H1 (cell line): ENCODE measurements at regions of chr7 and their contacts with region 1.

Region 1: GRCh38 chr7:137592232-137592896 is 248.8 kb upstream of the PTN start:
- DNase-seq: peak; percentile 25 to 62
- H3K4me3 ChIP-seq: no peak overlapping the region
- H3K27ac ChIP-seq: no peak overlapping the region
- H3K4me1 ChIP-seq: peaks cover 0 to 6% (median 1%) of the 10 kb centered on the region in 4 experiments; a peak in 4 of 7 replicates
- H3K27me3 ChIP-seq: no peaks in the 10 kb centered on the region
- CTCF ChIP-seq: peak; percentile 79 to 86 (median 85)
- EP300 ChIP-seq: no peak; a peak in 1 of 3 replicates
- POLR2A ChIP-seq: no peak
- RAD21 ChIP-seq: peak; percentile 98 to 99

Region 2: GRCh38 chr7:137169282-137169698 is 423.1 kb before region 1 on chr7:
- CTCF ChIA-PET with region 1: interaction called, 34 read pairs
- POLR2A ChIA-PET with region 1: no interaction called
- DNase-seq: peak; percentile 47 to 65
- H3K4me3 ChIP-seq: no peak overlapping the region
- H3K27ac ChIP-seq: no peak overlapping the region
- H3K4me1 ChIP-seq: no peaks in the 10 kb centered on the region
- H3K27me3 ChIP-seq: no peaks in the 10 kb centered on the region
- CTCF ChIP-seq: peak; percentile 89 to 98 (median 90)
- EP300 ChIP-seq: no peak
- POLR2A ChIP-seq: no peak
- RAD21 ChIP-seq: peak; percentile 99 to 100

Region 3: GRCh38 chr7:137421366-137421765 is 171.0 kb before region 1 on chr7:
- CTCF ChIA-PET with region 1: no interaction called
- POLR2A ChIA-PET with region 1: no interaction called
- DNase-seq: no peak
- H3K4me3 ChIP-seq: no peak overlapping the region
- H3K27ac ChIP-seq: no peak overlapping the region
- H3K4me1 ChIP-seq: no peaks in the 10 kb centered on the region
- H3K27me3 ChIP-seq: no peaks in the 10 kb centered on the region
- CTCF ChIP-seq: no peak
- EP300 ChIP-seq: no peak
- POLR2A ChIP-seq: no peak
- RAD21 ChIP-seq: no peak

Region 4: GRCh38 chr7:137454246-137454724 is 138.1 kb before region 1 on chr7:
- CTCF ChIA-PET with region 1: interaction called, 13 read pairs
- POLR2A ChIA-PET with region 1: no interaction called
- DNase-seq: no peak
- H3K4me3 ChIP-seq: no peak overlapping the region
- H3K27ac ChIP-seq: no peak overlapping the region
- H3K4me1 ChIP-seq: no peaks in the 10 kb centered on the region
- H3K27me3 ChIP-seq: no peaks in the 10 kb centered on the region
- CTCF ChIP-seq: peak in 2 of 3 experiments; percentile 39 to 52; a peak in 2 of 4 replicates
- EP300 ChIP-seq: no peak
- POLR2A ChIP-seq: no peak
- RAD21 ChIP-seq: peak; percentile 74 to 78

Region 5: DNA sequence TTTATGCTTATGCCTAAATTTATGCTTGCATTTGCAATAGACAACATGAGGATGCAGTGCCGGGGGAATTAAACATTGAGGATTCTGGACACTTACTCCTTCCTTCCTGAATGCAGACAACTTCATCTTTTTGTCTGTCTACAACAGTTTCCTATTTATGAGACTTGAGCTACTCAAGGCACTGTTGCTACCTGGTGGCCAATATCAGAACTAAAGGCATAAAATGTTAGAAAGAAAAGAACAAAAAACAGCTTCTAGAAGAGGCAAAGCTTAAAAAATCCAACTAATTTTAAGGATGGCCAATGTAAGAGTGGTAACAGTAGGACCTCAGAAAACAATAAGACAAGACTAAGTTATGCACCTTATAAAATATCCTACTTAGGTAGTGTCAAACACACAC is 104.3 kb before region 1 on chr7:
- CTCF ChIA-PET with region 1: interaction called, 11 read pairs
- POLR2A ChIA-PET with region 1: no interaction called
- DNase-seq: no peak
- H3K4me3 ChIP-seq: no peak overlapping the region
- H3K27ac ChIP-seq: no peak overlapping the region
- H3K4me1 ChIP-seq: no peaks in the 10 kb centered on the region; a peak in 1 of 7 replicates
- H3K27me3 ChIP-seq: no peaks in the 10 kb centered on the region
- CTCF ChIP-seq: no peak
- EP300 ChIP-seq: no peak
- POLR2A ChIP-seq: no peak
- RAD21 ChIP-seq: peak; percentile 26 to 43

Region 6: DNA sequence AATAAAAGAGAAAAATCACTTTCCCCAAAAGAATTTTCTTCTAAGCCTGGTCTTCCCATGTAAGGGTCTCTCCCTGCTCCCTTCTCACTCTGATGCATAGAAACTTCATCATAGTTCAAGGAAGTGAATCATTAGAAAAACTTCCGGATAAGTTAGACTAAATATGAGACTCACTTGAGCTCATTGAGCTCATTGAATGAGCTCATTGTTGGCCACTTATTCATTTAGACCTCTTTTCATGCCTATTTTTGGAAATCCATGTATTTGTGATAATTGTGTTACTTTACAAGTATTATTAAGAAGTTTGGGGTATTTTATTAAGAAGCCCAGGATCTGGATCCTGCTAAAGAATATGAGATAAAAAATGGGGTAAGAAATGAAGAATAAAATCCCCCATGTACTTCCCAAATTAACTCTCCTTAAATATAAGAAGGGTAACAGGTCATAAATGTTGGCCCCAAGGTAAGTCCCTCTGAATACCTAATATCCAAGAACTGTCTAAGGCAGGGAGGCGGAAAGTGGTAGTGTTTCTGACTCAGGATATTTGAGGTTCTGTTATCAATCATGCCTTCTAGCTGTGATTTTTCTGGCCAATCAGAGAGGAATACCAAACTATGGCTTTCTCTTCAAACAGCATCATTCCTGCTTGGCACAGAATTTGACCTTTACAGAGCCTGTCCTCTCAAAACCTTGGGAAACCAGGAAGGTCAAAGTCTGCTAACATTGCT is 12.3 kb before region 1 on chr7:
- CTCF ChIA-PET with region 1: interaction called, 34 read pairs
- POLR2A ChIA-PET with region 1: no interaction called
- DNase-seq: no peak
- H3K4me3 ChIP-seq: no peak overlapping the region
- H3K27ac ChIP-seq: no peak overlapping the region
- H3K4me1 ChIP-seq: peaks cover 0 to 4% (median 0%) of the 10 kb centered on the region in 4 experiments; a peak in 1 of 7 replicates
- H3K27me3 ChIP-seq: no peaks in the 10 kb centered on the region
- CTCF ChIP-seq: no peak
- EP300 ChIP-seq: no peak
- POLR2A ChIP-seq: no peak
- RAD21 ChIP-seq: no peak

Region 7: GRCh38 chr7:137606061-137606674 is 13.8 kb after region 1 on chr7:
- CTCF ChIA-PET with region 1: interaction called, 11 read pairs
- POLR2A ChIA-PET with region 1: no interaction called
- DNase-seq: no peak
- H3K4me3 ChIP-seq: no peak overlapping the region
- H3K27ac ChIP-seq: no peak overlapping the region
- H3K4me1 ChIP-seq: no peaks in the 10 kb centered on the region; a peak in 1 of 7 replicates
- H3K27me3 ChIP-seq: no peaks in the 10 kb centered on the region
- CTCF ChIP-seq: no peak; a peak in 1 of 4 replicates
- EP300 ChIP-seq: no peak
- POLR2A ChIP-seq: no peak
- RAD21 ChIP-seq: peak in 1 of 2 experiments; percentile 31; a peak in 2 of 4 replicates

Region 8: GRCh38 chr7:137626469-137627067 is 34.2 kb after region 1 on chr7:
- CTCF ChIA-PET with region 1: interaction called, 18 read pairs
- POLR2A ChIA-PET with region 1: no interaction called
- DNase-seq: peak in 1 of 2 experiments; percentile 85
- H3K4me3 ChIP-seq: no peak overlapping the region
- H3K27ac ChIP-seq: no peak overlapping the region
- H3K4me1 ChIP-seq: no peaks in the 10 kb centered on the region
- H3K27me3 ChIP-seq: no peaks in the 10 kb centered on the region
- CTCF ChIP-seq: peak; percentile 71 to 92 (median 89)
- EP300 ChIP-seq: no peak
- POLR2A ChIP-seq: no peak
- RAD21 ChIP-seq: peak; percentile 80 to 88

Region 9: GRCh38 chr7:137652721-137653120 is 60.4 kb after region 1 on chr7:
- CTCF ChIA-PET with region 1: no interaction called
- POLR2A ChIA-PET with region 1: no interaction called
- DNase-seq: no peak
- H3K4me3 ChIP-seq: no peak overlapping the region
- H3K27ac ChIP-seq: no peak overlapping the region
- H3K4me1 ChIP-seq: peaks cover 0 to 7% (median 7%) of the 10 kb centered on the region in 4 experiments; a peak in 4 of 7 replicates
- H3K27me3 ChIP-seq: no peaks in the 10 kb centered on the region
- CTCF ChIP-seq: no peak
- EP300 ChIP-seq: no peak
- POLR2A ChIP-seq: no peak
- RAD21 ChIP-seq: no peak

Region 10: DNA sequence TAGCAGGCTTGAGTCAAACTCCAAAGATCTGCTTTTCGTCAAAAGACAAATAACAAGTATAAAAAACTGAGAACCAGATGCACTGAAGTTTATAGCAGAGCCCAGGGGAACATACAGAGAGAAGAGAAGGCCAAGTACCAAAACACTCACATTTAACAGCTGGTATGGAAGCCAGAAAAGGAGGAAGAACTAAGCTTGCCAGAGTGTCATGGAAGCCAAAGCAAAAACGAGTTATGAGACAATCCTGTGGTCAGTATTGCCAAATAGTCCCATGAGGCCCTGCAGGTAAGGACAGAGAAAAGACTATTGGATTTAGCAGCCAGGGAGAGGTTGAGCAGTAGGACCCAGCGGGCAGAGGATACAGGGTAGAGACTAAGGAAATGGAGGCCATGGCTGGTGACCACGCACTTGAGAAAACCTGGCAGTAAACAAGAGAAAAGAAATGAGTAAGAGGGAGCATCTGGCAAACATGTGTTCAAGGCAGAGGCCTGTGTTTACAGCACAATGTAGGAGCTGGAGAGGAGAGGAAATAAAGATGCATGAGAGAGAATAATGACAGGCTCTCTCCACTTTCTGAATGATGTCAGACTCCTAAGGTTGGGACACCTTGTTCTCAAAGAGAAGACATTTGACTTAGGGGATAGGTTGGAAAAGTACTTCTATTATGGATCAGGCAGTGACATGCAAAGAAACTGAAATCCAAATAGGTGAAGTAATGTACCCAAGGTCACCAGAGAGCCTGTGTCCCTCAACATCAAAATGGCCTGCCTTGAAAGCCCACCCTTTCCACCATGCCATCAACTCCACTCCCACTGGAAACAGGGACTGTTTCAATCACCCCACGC is 400.4 kb after region 1 on chr7:
- CTCF ChIA-PET with region 1: no interaction called
- POLR2A ChIA-PET with region 1: no interaction called
- DNase-seq: no peak
- H3K4me3 ChIP-seq: no peak overlapping the region
- H3K27ac ChIP-seq: no peak overlapping the region
- H3K4me1 ChIP-seq: peaks cover 0 to 10% (median 0%) of the 10 kb centered on the region in 4 experiments; a peak in 3 of 7 replicates
- H3K27me3 ChIP-seq: no peaks in the 10 kb centered on the region
- CTCF ChIP-seq: no peak
- EP300 ChIP-seq: no peak
- POLR2A ChIP-seq: no peak
- RAD21 ChIP-seq: no peak

Region 11: GRCh38 chr7:138303943-138304495 is 711.7 kb after region 1 on chr7:
- CTCF ChIA-PET with region 1: no interaction called
- POLR2A ChIA-PET with region 1: no interaction called
- DNase-seq: no peak
- H3K4me3 ChIP-seq: no peak overlapping the region
- H3K27ac ChIP-seq: no peak overlapping the region
- H3K4me1 ChIP-seq: no peaks in the 10 kb centered on the region; a peak in 1 of 7 replicates
- H3K27me3 ChIP-seq: no peaks in the 10 kb centered on the region; a peak in 1 of 7 replicates
- CTCF ChIP-seq: no peak
- EP300 ChIP-seq: no peak
- POLR2A ChIP-seq: no peak
- RAD21 ChIP-seq: no peak